HepG2 (cell line): ENCODE measurements at regions of chr18 and their contacts with region 1.

Region 1: GRCh38 chr18:25832001-25832604 is 258.3 kb downstream of the SS18 start:
- DNase-seq: peak; percentile 25
- ATAC-seq: peak; percentile 96
- H3K4me3 ChIP-seq: no peak overlapping the region
- H3K27ac ChIP-seq: no peak overlapping the region
- H3K4me1 ChIP-seq: peaks cover 13% of the 10 kb centered on the region
- H3K27me3 ChIP-seq: no peaks in the 10 kb centered on the region
- CTCF ChIP-seq: peak; percentile 72
- EP300 ChIP-seq: no peak
- POLR2A ChIP-seq: no peak
- RAD21 ChIP-seq: peak; percentile 53

Region 2: GRCh38 chr18:24543805-24544498 is 1288.2 kb before region 1 on chr18:
- CTCF ChIA-PET with region 1: no interaction called
- POLR2A ChIA-PET with region 1: no interaction called
- in situ Hi-C with region 1: no loop called
- intact Hi-C with region 1: loop called (anchors 5 kb)
- DNase-seq: peak; percentile 22
- ATAC-seq: peak; percentile 58; the same call in 2 of the 3 replicates
- H3K4me3 ChIP-seq: no peak overlapping the region
- H3K27ac ChIP-seq: no peak overlapping the region
- H3K4me1 ChIP-seq: no peaks in the 10 kb centered on the region
- H3K27me3 ChIP-seq: no peaks in the 10 kb centered on the region; a peak in 1 of 5 replicates
- CTCF ChIP-seq: peak; percentile 54
- EP300 ChIP-seq: no peak
- POLR2A ChIP-seq: no peak
- RAD21 ChIP-seq: no peak

Region 3: GRCh38 chr18:24878289-24878688 is 953.8 kb before region 1 on chr18:
- CTCF ChIA-PET with region 1: interaction called, 8 read pairs
- POLR2A ChIA-PET with region 1: no interaction called
- in situ Hi-C with region 1: loop called (anchors 25 kb)
- intact Hi-C with region 1: loop called (anchors 1 kb)
- DNase-seq: peak; percentile 7
- ATAC-seq: no peak; the same call in 2 of the 3 replicates
- H3K4me3 ChIP-seq: no peak overlapping the region
- H3K27ac ChIP-seq: no peak overlapping the region
- H3K4me1 ChIP-seq: no peaks in the 10 kb centered on the region
- H3K27me3 ChIP-seq: no peaks in the 10 kb centered on the region
- CTCF ChIP-seq: peak; percentile 51
- EP300 ChIP-seq: no peak
- POLR2A ChIP-seq: no peak
- RAD21 ChIP-seq: no peak

Region 4: GRCh38 chr18:25561918-25562317 is 270.2 kb before region 1 on chr18:
- CTCF ChIA-PET with region 1: interaction called, 6 read pairs
- POLR2A ChIA-PET with region 1: no interaction called
- in situ Hi-C with region 1: loop called (anchors 25 kb)
- intact Hi-C with region 1: loop called (anchors 1 kb)
- DNase-seq: peak; percentile 12
- ATAC-seq: peak; percentile 59
- H3K4me3 ChIP-seq: no peak overlapping the region
- H3K27ac ChIP-seq: no peak overlapping the region
- H3K4me1 ChIP-seq: no peaks in the 10 kb centered on the region
- H3K27me3 ChIP-seq: no peaks in the 10 kb centered on the region
- CTCF ChIP-seq: peak; percentile 34; the same call in 1 of the 2 replicates
- EP300 ChIP-seq: no peak
- POLR2A ChIP-seq: no peak
- RAD21 ChIP-seq: no peak